Tibial artery (tissue), 4 donors: ENCODE measurements at regions of chr7 and their contacts with region 1.

Region 1: DNA sequence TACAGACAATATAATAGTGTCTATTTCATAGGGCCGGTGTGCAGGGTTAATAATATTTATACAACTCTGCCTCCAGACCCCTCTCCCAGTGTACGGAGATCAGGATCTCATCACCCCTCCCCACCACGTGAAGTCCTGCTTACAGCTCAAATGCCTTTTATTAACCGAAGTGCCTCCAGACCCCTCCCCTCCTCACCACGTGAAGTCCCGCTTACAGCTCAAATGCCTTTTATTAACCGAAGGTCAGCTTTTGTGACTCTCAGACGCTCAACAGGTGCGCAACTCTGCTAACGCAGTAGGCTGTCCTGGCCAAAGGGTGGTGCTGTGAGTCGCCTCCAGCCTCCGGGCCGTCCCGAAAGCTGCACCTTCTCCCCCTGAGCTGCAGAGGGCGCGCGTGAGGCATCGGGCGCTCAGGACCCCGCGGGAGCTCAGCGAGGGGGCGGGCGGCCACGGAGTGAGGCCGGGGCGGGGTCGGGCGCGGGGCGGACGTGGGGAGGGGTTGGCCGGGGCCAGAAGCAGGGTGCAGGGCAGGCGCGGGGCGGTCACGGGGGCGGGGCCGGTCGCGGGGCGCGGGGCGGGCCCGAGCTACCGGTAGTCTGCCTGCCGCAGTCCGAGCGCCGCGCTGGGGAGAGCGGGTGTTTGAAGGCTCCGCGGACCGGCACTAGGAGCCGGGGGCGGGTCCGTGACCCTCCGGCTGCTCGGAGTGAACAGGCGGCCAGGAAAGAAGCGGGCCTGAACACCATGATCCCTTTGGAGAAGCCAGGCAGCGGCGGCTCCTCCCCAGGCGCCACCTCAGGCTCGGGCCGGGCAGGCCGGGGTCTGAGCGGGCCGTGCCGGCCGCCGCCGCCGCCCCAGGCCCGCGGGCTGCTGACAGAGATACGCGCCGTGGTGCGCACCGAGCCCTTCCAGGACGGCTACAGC is at the start of gene STK17A:
- DNase-seq: peak; percentile 85 to 95
- H3K4me3 ChIP-seq: peak within 1 kb of the TSS; percentile 76 to 85
- H3K27ac ChIP-seq: peak within 1 kb of the TSS; percentile 87 to 91
- H3K4me1 ChIP-seq: peaks cover 0 to 39% (median 21%) of the 10 kb centered on the region in 4 donors
- H3K27me3 ChIP-seq: no peaks in the 10 kb centered on the region
- CTCF ChIP-seq: peak; percentile 99 to 100

Region 2: GRCh38 chr7:43647673-43648472 is 65.1 kb after region 1 on chr7:
- intact Hi-C with region 1: loop called (anchors 10 kb)
- DNase-seq: peak; percentile 81 to 83
- H3K4me3 ChIP-seq: peak overlapping the region; percentile 29
- H3K27ac ChIP-seq: peak overlapping the region; percentile 82 to 91
- H3K4me1 ChIP-seq: peaks cover 0 to 84% (median 74%) of the 10 kb centered on the region in 4 donors
- H3K27me3 ChIP-seq: no peaks in the 10 kb centered on the region
- CTCF ChIP-seq: no peak

Region 3: GRCh38 chr7:43700059-43700501 is 117.3 kb after region 1 on chr7:
- intact Hi-C with region 1: loop called (anchors 2 kb)
- DNase-seq: no peak
- H3K4me3 ChIP-seq: no peak overlapping the region
- H3K27ac ChIP-seq: no peak overlapping the region
- H3K4me1 ChIP-seq: no peaks in the 10 kb centered on the region
- H3K27me3 ChIP-seq: no peaks in the 10 kb centered on the region
- CTCF ChIP-seq: peak; percentile 63 to 81

Region 4: DNA sequence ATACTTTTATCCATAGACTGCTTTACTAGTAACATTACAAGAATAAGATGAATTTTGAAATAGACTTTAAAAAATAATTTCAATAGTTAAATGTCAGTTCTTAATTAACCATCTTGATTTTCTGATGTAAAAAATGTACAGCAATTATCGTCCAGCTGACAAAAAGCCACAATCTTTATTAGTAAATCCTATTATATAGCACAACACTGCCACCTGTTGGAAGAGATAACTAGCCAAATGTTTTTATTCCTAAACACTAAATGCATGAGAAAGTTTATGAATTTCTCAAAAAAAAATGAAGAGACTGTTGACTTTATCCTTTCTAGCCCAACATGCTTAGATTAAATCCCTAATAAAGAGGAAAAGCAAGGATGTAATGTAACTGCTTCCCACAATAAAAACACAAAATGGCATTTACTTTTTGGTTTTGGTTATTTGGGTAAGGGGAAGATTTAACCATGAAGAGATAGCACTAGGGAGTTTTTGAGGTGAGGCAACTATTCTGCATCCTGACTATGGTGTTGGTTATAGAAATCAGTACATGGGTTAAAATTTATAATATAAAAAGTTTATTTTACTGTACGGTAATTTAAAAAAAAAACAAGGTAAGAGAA is 138.5 kb after region 1 on chr7:
- intact Hi-C with region 1: loop called (anchors 5 kb)
- DNase-seq: no peak
- H3K4me3 ChIP-seq: no peak overlapping the region
- H3K27ac ChIP-seq: no peak overlapping the region
- H3K4me1 ChIP-seq: peaks cover 0 to under 1% (median 0%) of the 10 kb centered on the region in 4 donors
- H3K27me3 ChIP-seq: no peaks in the 10 kb centered on the region
- CTCF ChIP-seq: peak; percentile 53 to 76

Region 5: GRCh38 chr7:43834463-43835251 is 251.9 kb after region 1 on chr7:
- intact Hi-C with region 1: loop called (anchors 10 kb)
- DNase-seq: no peak
- H3K4me3 ChIP-seq: peak overlapping the region in 1 of 2 donors; percentile 20
- H3K27ac ChIP-seq: no peak overlapping the region
- H3K4me1 ChIP-seq: peaks cover 0 to 8% (median 4%) of the 10 kb centered on the region in 4 donors
- H3K27me3 ChIP-seq: peaks cover 0 to 3% of the 10 kb centered on the region in 2 donors
- CTCF ChIP-seq: no peak